IMR-90 (cell line): ENCODE measurements at regions of chr1 and their contacts with region 1.

Region 1: GRCh38 chr1:81330521-81330920 is 470.2 kb upstream of the ADGRL2 start:
- DNase-seq: no peak
- ATAC-seq: no peak
- H3K4me3 ChIP-seq: no peak overlapping the region
- H3K27ac ChIP-seq: no peak overlapping the region
- H3K4me1 ChIP-seq: no peaks in the 10 kb centered on the region
- H3K27me3 ChIP-seq: no peaks in the 10 kb centered on the region
- CTCF ChIP-seq: no peak
- POLR2A ChIP-seq: no peak
- RAD21 ChIP-seq: no peak

Region 2: GRCh38 chr1:81270051-81270450 is 60.5 kb before region 1 on chr1:
- CTCF ChIA-PET with region 1: no interaction called
- POLR2A ChIA-PET with region 1: no interaction called
- dilution Hi-C with region 1: no loop called
- in situ Hi-C with region 1: no loop called
- intact Hi-C with region 1: loop called (anchors 10 kb)
- DNase-seq: no peak
- ATAC-seq: no peak
- H3K4me3 ChIP-seq: no peak overlapping the region
- H3K27ac ChIP-seq: no peak overlapping the region
- H3K4me1 ChIP-seq: no peaks in the 10 kb centered on the region
- H3K27me3 ChIP-seq: no peaks in the 10 kb centered on the region
- CTCF ChIP-seq: no peak
- POLR2A ChIP-seq: no peak
- RAD21 ChIP-seq: no peak